Activated CD4-positive, alpha-beta T cell treated with anti-CD3 and anti-CD28 coated beads, Interleukin-2, amount 10 ng/mL, durations not matched to agents 24 days and 14 days (primary cell): ENCODE measurements at regions of chr4 and their contacts with region 1.

Region 1: GRCh38 chr4:123396307-123397143 is at the start of gene SPRY1:
- DNase-seq: peak; percentile 95
- H3K4me3 Mint-ChIP-seq: peak within 1 kb of the TSS; percentile 88
- H3K27ac Mint-ChIP-seq: peak within 1 kb of the TSS; percentile 92
- H3K4me1 Mint-ChIP-seq: peaks cover 23% of the 10 kb centered on the region
- H3K27me3 Mint-ChIP-seq: peaks cover 7% of the 10 kb centered on the region
- total RNA-seq, gene SPRY1: 60.2 and 60.5 TPM in 2 replicates

Region 2: GRCh38 chr4:122922877-122923511 is 473.5 kb before region 1 on chr4:
- intact Hi-C with region 1: loop called (anchors 2 kb)
- DNase-seq: peak; percentile 97
- H3K4me3 Mint-ChIP-seq: no peak overlapping the region
- H3K27ac Mint-ChIP-seq: peak overlapping the region; percentile 96
- H3K4me1 Mint-ChIP-seq: peaks cover 24% of the 10 kb centered on the region
- H3K27me3 Mint-ChIP-seq: no peaks in the 10 kb centered on the region

Region 3: DNA sequence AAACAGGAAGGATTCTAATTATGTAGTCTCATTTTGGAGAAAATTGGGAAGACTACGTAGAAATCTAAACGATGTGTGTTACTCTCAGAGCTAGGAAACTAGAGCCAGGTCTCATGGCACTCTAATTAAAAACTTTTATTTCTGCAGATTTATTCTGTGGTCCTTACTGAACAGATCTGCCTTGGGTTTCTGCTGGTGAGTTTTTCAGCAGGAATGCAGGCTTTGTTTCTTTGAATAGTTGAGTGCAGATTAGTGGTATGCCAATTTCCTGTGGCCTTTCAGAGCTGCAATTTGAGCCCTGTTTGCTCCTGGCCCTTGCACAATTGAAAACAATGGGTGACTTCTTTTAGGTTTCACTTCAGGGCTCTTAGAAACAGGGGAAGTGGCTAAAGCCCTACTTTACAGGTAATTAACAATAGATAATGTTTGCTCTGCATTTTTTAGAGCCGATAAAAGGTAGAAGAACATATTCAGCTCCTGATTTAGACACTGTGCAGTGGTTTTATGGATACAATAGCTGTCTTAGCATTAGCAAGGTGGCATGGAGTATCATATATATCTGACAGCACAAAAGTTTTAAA is 21.9 kb after region 1 on chr4:
- intact Hi-C with region 1: loop called (anchors 1 kb)
- DNase-seq: peak; percentile 71
- H3K4me3 Mint-ChIP-seq: peak overlapping the region; percentile 57
- H3K27ac Mint-ChIP-seq: peak overlapping the region; percentile 99
- H3K4me1 Mint-ChIP-seq: peaks cover 69% of the 10 kb centered on the region
- H3K27me3 Mint-ChIP-seq: no peaks in the 10 kb centered on the region

Region 4: DNA sequence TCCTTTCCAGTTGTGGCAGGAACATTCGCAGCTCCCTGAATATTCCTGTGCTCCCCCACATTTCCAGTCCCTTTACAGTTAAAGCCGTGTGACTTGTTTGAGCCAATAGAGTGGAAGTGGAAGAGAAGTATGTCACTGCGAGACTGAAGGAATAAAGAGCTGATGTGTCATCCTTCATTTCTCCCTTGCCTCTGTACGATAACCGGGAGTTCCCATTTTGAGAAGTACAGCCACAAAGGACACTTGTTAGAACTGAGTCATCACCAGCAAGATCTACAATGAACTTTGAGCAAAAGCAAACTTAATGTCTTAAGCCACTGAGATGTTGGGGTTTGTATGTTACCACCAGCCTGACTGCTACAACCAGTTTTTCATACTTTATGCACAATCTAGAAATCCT is 92.4 kb after region 1 on chr4:
- intact Hi-C with region 1: loop called (anchors 1 kb)
- DNase-seq: peak; percentile 63
- H3K4me3 Mint-ChIP-seq: no peak overlapping the region
- H3K27ac Mint-ChIP-seq: peak overlapping the region; percentile 72
- H3K4me1 Mint-ChIP-seq: peaks cover 14% of the 10 kb centered on the region
- H3K27me3 Mint-ChIP-seq: no peaks in the 10 kb centered on the region

Region 5: DNA sequence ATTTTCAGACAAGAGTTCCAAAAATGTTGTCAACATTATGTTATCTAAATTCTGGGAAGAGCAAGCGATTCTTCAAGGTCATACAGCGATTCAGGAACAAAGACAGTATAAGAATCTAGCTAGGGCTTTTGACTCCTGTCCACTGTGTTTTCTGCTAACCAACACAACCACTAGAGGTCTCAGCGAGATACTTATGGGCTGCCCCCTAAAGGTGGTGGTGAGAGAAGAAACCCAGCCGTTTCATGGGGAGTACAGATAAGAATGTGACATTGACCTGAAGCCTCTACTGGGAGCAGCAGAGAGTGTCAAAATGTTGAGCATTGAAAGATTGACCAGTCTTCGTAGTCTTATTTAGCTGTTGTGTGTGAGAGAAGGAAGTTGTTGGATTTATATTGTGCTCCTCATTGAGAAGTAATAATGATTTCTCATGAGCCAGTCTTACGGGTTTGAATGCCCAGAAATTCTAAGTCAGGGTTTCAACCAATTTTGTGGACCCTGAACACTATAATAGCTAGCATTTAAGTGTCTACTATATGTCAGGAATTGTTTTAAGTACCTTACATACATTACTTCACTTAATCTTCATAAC is 168.3 kb after region 1 on chr4:
- intact Hi-C with region 1: loop called (anchors 2 kb)
- DNase-seq: peak; percentile 87
- H3K4me3 Mint-ChIP-seq: no peak overlapping the region
- H3K27ac Mint-ChIP-seq: no peak overlapping the region
- H3K4me1 Mint-ChIP-seq: peaks cover 8% of the 10 kb centered on the region
- H3K27me3 Mint-ChIP-seq: peaks cover 22% of the 10 kb centered on the region

Region 6: DNA sequence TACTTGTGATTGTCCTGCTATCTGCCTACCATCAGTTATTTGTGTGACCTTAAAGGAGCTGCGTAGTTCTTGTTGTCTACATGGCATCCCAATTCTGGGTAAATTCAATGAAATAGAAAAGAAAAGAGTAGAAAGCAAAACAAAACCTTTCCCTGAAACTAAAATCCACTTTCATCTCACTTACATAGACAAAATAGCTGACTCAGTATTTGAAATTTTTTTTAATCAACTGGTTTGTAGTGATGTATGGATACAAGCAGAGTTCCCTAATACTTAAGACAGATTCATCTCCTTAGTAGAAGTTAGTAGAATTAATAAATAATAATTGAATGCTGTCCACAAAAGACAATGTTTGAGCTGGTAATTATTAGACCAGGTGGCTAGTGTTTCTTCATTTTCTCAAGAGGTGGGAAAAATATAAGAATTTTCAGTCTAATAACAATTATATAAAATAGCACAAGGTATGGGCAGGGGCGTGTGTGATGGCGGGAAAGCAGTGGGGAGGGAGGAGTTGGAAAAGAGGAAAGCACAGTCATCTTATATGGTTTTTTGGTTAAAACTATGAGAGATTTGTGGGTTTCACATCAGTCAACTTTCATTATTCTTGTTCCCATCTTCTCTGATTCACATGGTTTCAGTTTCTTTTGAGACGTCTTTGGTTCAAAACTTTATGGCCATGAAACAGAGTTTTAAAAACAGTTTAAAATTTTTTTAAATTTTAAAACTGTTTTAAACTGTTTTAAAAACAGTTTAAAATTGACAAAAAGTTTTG is 275.3 kb after region 1 on chr4:
- intact Hi-C with region 1: loop called (anchors 1 kb)
- DNase-seq: peak; percentile 74
- H3K4me3 Mint-ChIP-seq: peak overlapping the region; percentile 24
- H3K27ac Mint-ChIP-seq: peak overlapping the region; percentile 72
- H3K4me1 Mint-ChIP-seq: peaks cover 21% of the 10 kb centered on the region
- H3K27me3 Mint-ChIP-seq: peaks cover 67% of the 10 kb centered on the region